T-cell (primary cell): ENCODE measurements at regions of chr9 and their contacts with region 1.

Region 1: DNA sequence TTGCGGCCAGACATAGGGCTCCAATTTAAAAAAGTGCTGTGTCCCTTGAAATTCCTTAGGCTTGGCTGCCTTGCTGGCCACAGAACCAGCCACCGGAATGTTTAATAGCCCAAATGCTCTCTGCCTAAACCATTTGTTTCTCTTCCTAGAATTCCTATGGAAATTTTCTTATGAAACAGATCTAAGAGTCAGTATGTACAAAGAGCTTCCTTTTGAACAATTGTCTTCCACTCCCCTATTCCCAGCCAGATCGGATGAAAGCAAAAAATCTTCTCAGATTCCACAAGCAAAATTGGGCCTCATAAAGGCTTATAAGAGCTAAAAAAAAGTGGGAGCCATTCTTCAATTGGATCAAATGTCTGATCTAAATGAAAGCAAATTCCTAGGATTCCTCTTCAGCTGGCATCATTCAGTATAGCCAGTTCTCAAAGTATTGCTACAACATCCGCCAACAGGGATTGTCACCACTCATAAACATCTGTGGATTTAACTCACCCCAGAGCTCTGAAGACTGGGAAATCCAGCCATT is 104.3 kb downstream of the CEMIP2 start:
- DNase-seq: no peak
- ATAC-seq: no peak
- H3K4me3 ChIP-seq: no peak overlapping the region
- H3K4me3 Mint-ChIP-seq: no peak overlapping the region
- H3K27ac ChIP-seq: no peak overlapping the region
- H3K27ac Mint-ChIP-seq: no peak overlapping the region
- H3K4me1 ChIP-seq: no peaks in the 10 kb centered on the region
- H3K4me1 Mint-ChIP-seq: peaks cover 0 to 8% (median 3%) of the 10 kb centered on the region in 3 donors
- H3K27me3 ChIP-seq: no peaks in the 10 kb centered on the region
- H3K27me3 Mint-ChIP-seq: peaks cover 0 to 4% of the 10 kb centered on the region in 2 donors

Region 2: GRCh38 chr9:71683598-71684235 is 19.7 kb after region 1 on chr9:
- CTCF ChIA-PET with region 1: interaction called in 1 of 2 experiments, 5 read pairs
- POLR2A ChIA-PET with region 1: interaction called in 1 of 2 experiments, 10 read pairs
- DNase-seq: peak in 2 of 35 experiments; percentile 2 to 14
- ATAC-seq: no peak
- H3K4me3 ChIP-seq: no peak overlapping the region
- H3K4me3 Mint-ChIP-seq: peak overlapping the region in 1 of 3 donors; percentile 17
- H3K27ac ChIP-seq: no peak overlapping the region
- H3K27ac Mint-ChIP-seq: peak overlapping the region; percentile 23 to 71
- H3K4me1 ChIP-seq: peaks cover 31 to 41% of the 10 kb centered on the region in 2 experiments
- H3K4me1 Mint-ChIP-seq: peaks cover 53 to 68% (median 66%) of the 10 kb centered on the region in 3 donors
- H3K27me3 ChIP-seq: no peaks in the 10 kb centered on the region
- H3K27me3 Mint-ChIP-seq: no peaks in the 10 kb centered on the region